SK-N-SH (cell line): ENCODE measurements at regions of chr22 and their contacts with region 1.

Region 1: GRCh38 chr22:22959147-22959827 is 71.7 kb downstream of the IGLL5 start:
- DNase-seq: peak; percentile 73
- H3K4me3 ChIP-seq: no peak overlapping the region; a peak in 1 of 4 replicates
- H3K27ac ChIP-seq: no peak overlapping the region
- H3K4me1 ChIP-seq: peaks cover 0 to 2% of the 10 kb centered on the region in 2 experiments; a peak in 1 of 4 replicates
- H3K27me3 ChIP-seq: no peaks in the 10 kb centered on the region
- CTCF ChIP-seq: peak; percentile 98
- EP300 ChIP-seq: no peak
- RAD21 ChIP-seq: peak; percentile 100

Region 2: GRCh38 chr22:22787786-22788459 is 171.4 kb before region 1 on chr22:
- CTCF ChIA-PET with region 1: interaction called, 46 read pairs
- POLR2A ChIA-PET with region 1: no interaction called
- DNase-seq: peak; percentile 66
- H3K4me3 ChIP-seq: peak overlapping the region in 1 of 2 experiments; percentile 31; a peak in 1 of 4 replicates
- H3K27ac ChIP-seq: no peak overlapping the region
- H3K4me1 ChIP-seq: no peaks in the 10 kb centered on the region
- H3K27me3 ChIP-seq: no peaks in the 10 kb centered on the region
- CTCF ChIP-seq: peak; percentile 79
- EP300 ChIP-seq: no peak
- RAD21 ChIP-seq: peak; percentile 55

Region 3: GRCh38 chr22:22942511-22943329 is 16.6 kb before region 1 on chr22:
- CTCF ChIA-PET with region 1: interaction called, 127 read pairs
- POLR2A ChIA-PET with region 1: no interaction called
- DNase-seq: peak; percentile 80
- H3K4me3 ChIP-seq: no peak overlapping the region; a peak in 1 of 4 replicates
- H3K27ac ChIP-seq: no peak overlapping the region
- H3K4me1 ChIP-seq: peaks cover 0 to 8% of the 10 kb centered on the region in 2 experiments; a peak in 1 of 4 replicates
- H3K27me3 ChIP-seq: no peaks in the 10 kb centered on the region
- CTCF ChIP-seq: peak; percentile 74
- EP300 ChIP-seq: no peak
- RAD21 ChIP-seq: peak; percentile 60

Region 4: DNA sequence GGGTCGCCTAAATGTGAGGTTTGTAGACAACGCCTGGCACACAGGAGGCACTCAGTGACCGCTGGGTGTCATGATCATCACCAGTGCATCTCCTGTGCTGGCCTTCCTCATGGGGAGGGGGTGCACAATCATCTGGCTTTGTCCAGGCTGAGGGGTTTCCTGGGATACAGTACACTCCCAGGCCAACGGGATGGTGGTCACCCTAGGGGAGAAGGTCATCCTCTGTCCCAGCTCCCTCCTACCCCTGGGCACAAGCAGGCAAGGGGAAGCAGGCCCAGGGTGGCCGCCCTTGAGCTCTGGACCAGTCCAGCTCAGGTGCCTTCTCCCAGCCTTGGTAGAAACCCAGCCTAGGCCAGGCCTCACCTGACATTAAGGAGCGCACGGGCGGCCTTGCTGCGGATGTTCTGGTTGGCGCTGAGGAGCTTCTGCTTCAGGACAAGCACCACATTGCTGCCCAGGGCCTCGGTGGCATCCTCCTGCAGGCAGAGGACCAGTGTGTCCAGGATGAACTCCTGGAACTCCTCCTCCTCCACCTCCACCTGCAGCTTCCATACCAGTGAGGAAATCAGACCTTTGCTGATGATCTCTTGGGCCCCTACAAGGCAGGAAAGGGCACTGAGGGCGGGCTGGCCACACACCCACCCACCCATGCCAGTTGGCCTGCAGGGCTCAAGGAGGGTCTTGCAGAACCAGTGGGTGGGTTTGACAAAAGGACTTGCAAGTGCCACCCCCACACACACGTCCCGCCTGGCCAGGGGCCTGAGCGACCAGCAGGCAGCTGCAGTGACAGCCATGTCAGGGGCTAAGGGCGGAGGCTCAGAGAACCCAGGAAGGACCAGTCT is 104.5 kb after region 1 on chr22:
- CTCF ChIA-PET with region 1: interaction called, 16 read pairs
- POLR2A ChIA-PET with region 1: no interaction called
- DNase-seq: peak; percentile 2
- H3K4me3 ChIP-seq: no peak overlapping the region
- H3K27ac ChIP-seq: no peak overlapping the region
- H3K4me1 ChIP-seq: peaks cover 0 to 1% of the 10 kb centered on the region in 2 experiments; a peak in 1 of 4 replicates
- H3K27me3 ChIP-seq: no peaks in the 10 kb centered on the region; the same call in 1 of the 2 replicates
- CTCF ChIP-seq: no peak
- EP300 ChIP-seq: no peak
- RAD21 ChIP-seq: no peak

Region 5: DNA sequence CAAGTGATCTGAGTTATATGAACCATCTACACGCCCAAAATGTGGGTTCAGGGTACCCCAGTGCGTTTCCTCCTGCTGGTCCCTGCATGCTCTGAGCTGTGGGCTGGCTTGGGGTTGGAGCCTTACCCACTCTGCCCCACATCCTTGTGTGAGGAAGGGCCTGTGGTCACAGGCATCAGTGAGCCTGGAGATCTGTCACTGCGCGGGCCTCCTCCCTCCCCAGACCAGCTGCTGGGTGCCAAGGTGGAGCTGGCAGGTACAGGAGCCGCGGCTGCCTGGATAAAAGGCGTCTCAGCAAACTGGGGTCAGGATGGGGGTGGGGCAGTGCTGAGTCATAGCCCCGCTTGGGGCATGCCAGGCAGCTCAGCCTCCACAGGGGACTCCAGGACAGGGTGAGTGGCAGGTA is 128.9 kb after region 1 on chr22:
- CTCF ChIA-PET with region 1: no interaction called
- POLR2A ChIA-PET with region 1: no interaction called
- DNase-seq: no peak
- H3K4me3 ChIP-seq: no peak overlapping the region
- H3K27ac ChIP-seq: no peak overlapping the region
- H3K4me1 ChIP-seq: no peaks in the 10 kb centered on the region; a peak in 1 of 4 replicates
- H3K27me3 ChIP-seq: no peaks in the 10 kb centered on the region
- CTCF ChIP-seq: no peak
- EP300 ChIP-seq: no peak
- RAD21 ChIP-seq: no peak

Region 6: GRCh38 chr22:23119494-23120414 is 160.5 kb after region 1 on chr22:
- CTCF ChIA-PET with region 1: interaction called, 161 read pairs
- POLR2A ChIA-PET with region 1: no interaction called
- DNase-seq: no peak
- H3K4me3 ChIP-seq: no peak overlapping the region
- H3K27ac ChIP-seq: no peak overlapping the region; a peak in 1 of 4 replicates
- H3K4me1 ChIP-seq: peaks cover 0 to 55% of the 10 kb centered on the region in 2 experiments; a peak in 1 of 4 replicates
- H3K27me3 ChIP-seq: no peaks in the 10 kb centered on the region
- CTCF ChIP-seq: no peak
- EP300 ChIP-seq: no peak
- RAD21 ChIP-seq: no peak

Region 7: DNA sequence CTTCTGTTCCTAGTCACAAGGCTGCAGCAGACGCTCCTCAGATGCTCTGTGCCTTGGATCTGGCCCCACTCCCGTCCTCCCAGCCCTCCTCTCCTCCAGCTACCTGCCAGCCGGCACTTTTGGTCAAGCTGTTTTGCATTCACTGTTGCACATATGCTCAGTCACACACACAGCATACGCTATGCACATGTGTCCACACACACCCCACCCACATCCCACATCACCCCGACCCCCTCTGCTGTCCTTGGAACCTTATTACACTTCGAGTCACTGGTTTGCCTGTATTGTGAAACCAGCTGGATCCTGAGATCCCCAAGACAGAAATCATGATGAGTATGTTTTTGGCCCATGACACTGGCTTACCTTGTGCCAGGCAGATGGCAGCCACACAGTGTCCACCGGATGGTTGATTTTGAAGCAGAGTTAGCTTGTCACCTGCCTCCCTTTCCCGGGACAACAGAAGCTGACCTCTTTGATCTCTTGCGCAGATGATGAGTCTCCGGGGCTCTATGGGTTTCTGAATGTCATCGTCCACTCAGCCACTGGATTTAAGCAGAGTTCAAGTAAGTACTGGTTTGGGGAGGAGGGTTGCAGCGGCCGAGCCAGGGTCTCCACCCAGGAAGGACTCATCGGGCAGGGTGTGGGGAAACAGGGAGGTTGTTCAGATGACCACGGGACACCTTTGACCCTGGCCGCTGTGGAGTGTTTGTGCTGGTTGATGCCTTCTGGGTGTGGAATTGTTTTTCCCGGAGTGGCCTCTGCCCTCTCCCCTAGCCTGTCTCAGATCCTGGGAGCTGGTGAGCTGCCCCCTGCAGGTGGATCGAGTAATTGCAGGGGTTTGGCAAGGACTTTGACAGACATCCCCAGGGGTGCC is 330.8 kb after region 1 on chr22:
- CTCF ChIA-PET with region 1: interaction called, 32 read pairs
- POLR2A ChIA-PET with region 1: no interaction called
- DNase-seq: peak; percentile 89
- H3K4me3 ChIP-seq: no peak overlapping the region; a peak in 1 of 4 replicates
- H3K27ac ChIP-seq: no peak overlapping the region
- H3K4me1 ChIP-seq: no peaks in the 10 kb centered on the region; a peak in 1 of 4 replicates
- H3K27me3 ChIP-seq: no peaks in the 10 kb centered on the region
- CTCF ChIP-seq: peak; percentile 84
- EP300 ChIP-seq: no peak
- RAD21 ChIP-seq: peak; percentile 54